Activated CD8-positive, alpha-beta T cell treated with anti-CD3 and anti-CD28 coated beads, Interleukin-2, amount 10 ng/mL, durations not matched to agents 7 days and 5 days (primary cell): ENCODE measurements at regions of chr17 and their contacts with region 1.

Region 1: DNA sequence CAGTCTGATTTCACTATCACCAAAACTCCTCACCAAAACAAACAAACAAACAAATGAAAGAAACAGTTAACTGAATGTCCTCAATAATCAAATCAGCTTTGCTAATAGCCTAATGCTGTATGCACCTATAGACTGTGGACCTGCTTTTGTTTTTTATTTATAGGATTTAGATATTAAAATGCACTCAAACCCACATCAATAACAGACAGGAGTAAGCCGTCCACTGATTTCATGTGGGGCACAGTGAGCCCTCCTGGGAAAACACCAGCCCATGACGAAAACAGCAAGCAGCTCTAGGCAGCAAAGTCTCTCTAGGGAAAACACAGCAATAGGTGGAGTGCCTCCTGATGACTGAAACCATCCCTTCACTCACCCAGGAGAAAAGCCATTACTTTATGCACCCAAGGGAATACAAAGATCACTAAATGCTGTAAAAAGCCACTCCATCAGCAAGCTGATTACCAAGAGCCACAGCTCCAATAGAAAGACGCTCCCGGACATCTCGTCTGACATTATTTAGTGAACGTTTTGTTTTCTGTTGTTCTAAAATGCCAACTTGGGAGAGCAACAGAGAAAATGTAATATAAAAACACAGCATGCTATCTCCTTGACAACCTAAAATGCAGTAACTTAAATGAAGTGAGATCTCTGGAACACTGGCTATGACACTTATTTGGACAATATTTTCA is 47.8 kb downstream of the ANKFY1 start:
- DNase-seq: no peak
- ATAC-seq: no peak
- H3K4me3 Mint-ChIP-seq: no peak overlapping the region
- H3K27ac Mint-ChIP-seq: no peak overlapping the region
- H3K4me1 Mint-ChIP-seq: peaks cover 7% of the 10 kb centered on the region
- H3K27me3 Mint-ChIP-seq: no peaks in the 10 kb centered on the region

Region 2: GRCh38 chr17:4199818-4200402 is 16.1 kb before region 1 on chr17:
- CTCF ChIA-PET with region 1: interaction called, 20 read pairs
- POLR2A ChIA-PET with region 1: no interaction called
- DNase-seq: peak; percentile 53
- ATAC-seq: peak; percentile 57
- H3K4me3 Mint-ChIP-seq: no peak overlapping the region
- H3K27ac Mint-ChIP-seq: no peak overlapping the region
- H3K4me1 Mint-ChIP-seq: no peaks in the 10 kb centered on the region
- H3K27me3 Mint-ChIP-seq: no peaks in the 10 kb centered on the region

Region 3: GRCh38 chr17:4229627-4230541 is 13.9 kb after region 1 on chr17:
- CTCF ChIA-PET with region 1: interaction called, 26 read pairs
- POLR2A ChIA-PET with region 1: no interaction called
- DNase-seq: no peak
- ATAC-seq: no peak
- H3K4me3 Mint-ChIP-seq: no peak overlapping the region
- H3K27ac Mint-ChIP-seq: no peak overlapping the region
- H3K4me1 Mint-ChIP-seq: peaks cover 16% of the 10 kb centered on the region
- H3K27me3 Mint-ChIP-seq: no peaks in the 10 kb centered on the region

Region 4: DNA sequence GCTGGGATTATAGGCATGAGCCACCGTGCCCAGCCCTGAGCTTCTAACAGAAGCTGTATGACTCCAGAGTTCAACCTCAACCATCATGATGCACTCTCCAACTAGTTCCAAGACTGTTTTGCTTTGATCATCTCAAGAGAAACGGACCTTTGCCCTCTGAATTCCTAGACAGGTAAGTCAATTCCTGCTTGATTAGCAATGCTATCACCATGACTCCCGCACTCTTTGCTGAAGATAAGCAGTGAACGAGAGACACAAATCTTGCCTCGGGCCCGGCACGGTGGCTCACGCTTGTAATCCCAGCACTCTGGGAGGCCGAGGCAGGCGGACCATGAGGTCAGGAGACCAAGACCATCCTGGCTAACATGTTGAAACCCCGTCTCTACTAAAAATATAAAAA is 25.5 kb after region 1 on chr17:
- CTCF ChIA-PET with region 1: interaction called, 14 read pairs
- POLR2A ChIA-PET with region 1: no interaction called
- DNase-seq: no peak
- ATAC-seq: no peak
- H3K4me3 Mint-ChIP-seq: no peak overlapping the region
- H3K27ac Mint-ChIP-seq: no peak overlapping the region
- H3K4me1 Mint-ChIP-seq: no peaks in the 10 kb centered on the region
- H3K27me3 Mint-ChIP-seq: no peaks in the 10 kb centered on the region

Region 5: GRCh38 chr17:4249452-4250029 is 33.5 kb after region 1 on chr17:
- CTCF ChIA-PET with region 1: interaction called, 19 read pairs
- POLR2A ChIA-PET with region 1: interaction called, 3 read pairs
- DNase-seq: no peak
- ATAC-seq: no peak
- H3K4me3 Mint-ChIP-seq: no peak overlapping the region
- H3K27ac Mint-ChIP-seq: peak overlapping the region; percentile 37
- H3K4me1 Mint-ChIP-seq: peaks cover 27% of the 10 kb centered on the region
- H3K27me3 Mint-ChIP-seq: no peaks in the 10 kb centered on the region

Region 6: DNA sequence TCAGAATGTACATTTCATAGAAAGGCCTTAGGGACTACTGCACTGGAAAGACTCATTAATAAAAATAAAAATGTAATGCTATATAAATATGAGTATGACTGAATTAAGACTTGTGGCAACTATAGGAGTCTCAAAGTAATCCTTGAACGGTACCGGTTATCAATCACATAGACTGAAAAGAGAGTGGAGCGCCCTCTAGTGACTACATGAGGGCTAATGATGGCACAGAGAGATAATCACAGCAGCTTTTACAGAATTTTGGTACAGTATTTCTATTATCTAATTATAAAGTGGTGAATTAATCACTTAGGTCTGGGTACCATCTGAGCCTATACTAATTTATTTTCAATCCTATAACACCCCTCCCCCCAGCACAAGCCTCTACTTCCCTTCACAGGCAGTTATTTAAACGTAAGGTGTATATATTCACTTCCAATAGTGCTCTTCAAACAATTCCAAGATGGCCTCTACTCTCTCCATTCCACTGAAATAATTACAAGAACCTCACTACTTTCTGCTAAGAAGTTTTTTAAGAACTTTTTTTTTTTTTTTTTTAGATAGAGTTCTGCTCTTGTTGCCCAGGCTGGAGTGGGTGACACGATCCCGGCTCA is 88.5 kb after region 1 on chr17:
- CTCF ChIA-PET with region 1: interaction called, 35 read pairs
- POLR2A ChIA-PET with region 1: no interaction called
- DNase-seq: peak; percentile 73
- ATAC-seq: peak; percentile 76
- H3K4me3 Mint-ChIP-seq: no peak overlapping the region
- H3K27ac Mint-ChIP-seq: no peak overlapping the region
- H3K4me1 Mint-ChIP-seq: peaks cover 9% of the 10 kb centered on the region
- H3K27me3 Mint-ChIP-seq: no peaks in the 10 kb centered on the region

Region 7: GRCh38 chr17:4412933-4413831 is 197.2 kb after region 1 on chr17:
- CTCF ChIA-PET with region 1: interaction called, 73 read pairs
- POLR2A ChIA-PET with region 1: no interaction called
- DNase-seq: peak; percentile 93
- ATAC-seq: peak; percentile 99
- H3K4me3 Mint-ChIP-seq: peak overlapping the region; percentile 36
- H3K27ac Mint-ChIP-seq: no peak overlapping the region
- H3K4me1 Mint-ChIP-seq: peaks cover 8% of the 10 kb centered on the region
- H3K27me3 Mint-ChIP-seq: no peaks in the 10 kb centered on the region